HEK293 (cell line): ENCODE measurements at regions of chr6 and their contacts with region 1.

Region 1: DNA sequence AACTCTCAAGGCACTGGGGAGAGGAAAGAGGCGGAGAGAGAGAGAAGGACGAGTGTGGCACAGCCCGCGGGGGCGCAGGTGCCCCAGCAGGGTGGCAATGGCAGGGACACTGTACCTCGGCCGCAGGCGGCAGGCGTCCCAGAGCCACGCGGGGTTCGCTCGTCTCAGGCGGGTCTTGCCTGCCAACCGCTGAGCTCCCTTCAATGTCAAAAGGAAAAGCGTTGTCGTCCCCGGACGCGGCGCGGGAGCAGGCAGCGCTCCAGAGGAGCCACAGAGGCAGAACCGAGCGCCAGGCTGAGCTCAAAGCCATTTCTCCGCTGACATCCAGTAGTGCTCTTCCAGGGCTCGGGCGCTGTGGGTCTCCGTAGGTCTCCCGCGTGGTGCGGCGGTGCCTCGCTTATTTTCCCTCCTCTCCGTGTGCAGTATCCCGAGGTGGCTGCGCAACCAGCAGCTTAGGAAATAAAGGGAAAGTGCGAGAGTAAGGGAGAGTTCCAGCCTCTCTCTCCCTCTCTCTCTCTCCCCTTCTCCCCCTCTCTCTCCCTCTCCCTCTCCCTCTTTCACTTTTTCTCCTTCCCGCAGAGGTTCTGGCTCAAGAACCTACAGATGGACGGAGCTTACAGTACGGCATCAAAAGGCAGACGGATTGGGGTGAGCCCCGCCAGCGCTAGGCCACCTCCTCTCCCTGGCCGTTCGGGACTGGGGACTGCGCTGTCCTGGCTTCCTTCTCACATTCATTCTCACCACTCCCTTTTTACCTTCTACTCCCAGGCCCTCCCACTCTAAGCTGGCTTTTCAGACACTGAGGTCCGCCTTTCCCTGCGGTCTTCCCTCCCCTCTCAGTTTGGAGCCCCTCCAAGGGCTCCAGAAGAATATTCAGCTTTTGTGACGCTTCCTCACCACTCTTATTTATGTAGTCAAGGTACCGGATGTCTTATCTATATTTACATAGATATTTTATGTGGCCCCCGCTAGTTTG is at the start of gene LAMA4:
- H3K4me3 ChIP-seq: peak within 1 kb of the TSS; percentile 74
- H3K27ac ChIP-seq: peak within 1 kb of the TSS; percentile 94
- H3K4me1 ChIP-seq: peaks cover 24% of the 10 kb centered on the region
- CTCF ChIP-seq: peak; percentile 74

Region 2: DNA sequence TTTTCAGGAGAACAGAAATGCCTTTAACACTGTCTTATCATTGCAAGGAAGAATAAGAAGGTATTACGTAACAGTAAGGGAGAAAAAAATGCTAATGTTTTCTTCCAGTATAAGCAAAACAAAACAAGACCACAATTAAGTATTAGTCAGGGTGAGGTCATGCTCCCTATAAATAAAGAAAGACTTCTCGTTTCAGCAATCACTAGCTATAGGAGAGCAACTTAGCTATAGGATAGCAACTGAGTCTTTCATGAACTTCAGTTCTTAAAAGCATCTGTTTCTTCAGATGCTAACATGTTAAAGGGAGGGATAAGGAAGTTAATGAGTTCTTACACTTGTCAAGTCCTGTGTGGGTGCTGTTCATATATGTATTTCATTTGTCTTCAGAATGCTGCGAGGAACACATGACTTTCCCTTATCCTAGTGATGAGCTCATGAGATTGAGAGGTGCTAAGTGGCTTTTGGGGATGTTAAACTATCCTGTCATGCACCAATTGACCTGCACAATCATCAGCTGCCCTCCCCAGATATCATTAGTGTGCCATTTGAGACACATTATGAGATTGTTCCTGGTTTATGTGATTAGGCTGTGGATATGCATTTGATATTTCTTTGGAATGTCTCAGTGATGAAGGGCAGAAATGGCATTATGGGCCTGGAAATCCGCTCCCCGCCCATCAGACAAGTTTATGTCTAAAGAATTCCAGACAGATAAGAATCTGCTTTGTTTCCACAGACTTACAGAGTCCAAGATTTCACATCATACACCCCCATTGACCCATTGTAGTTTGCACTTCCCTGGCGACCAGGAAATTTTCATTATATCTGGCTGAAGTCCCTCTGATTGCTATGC is 37.2 kb before region 1 on chr6:
- CTCF ChIA-PET with region 1: interaction called, 4 read pairs
- POLR2A ChIA-PET with region 1: interaction called, 20 read pairs
- H3K4me3 ChIP-seq: no peak overlapping the region
- H3K27ac ChIP-seq: peak overlapping the region; percentile 48
- H3K4me1 ChIP-seq: peaks cover 41% of the 10 kb centered on the region
- CTCF ChIP-seq: no peak

Region 3: GRCh38 chr6:112223070-112223861 is 30.9 kb before region 1 on chr6:
- CTCF ChIA-PET with region 1: no interaction called
- POLR2A ChIA-PET with region 1: interaction called, 11 read pairs
- H3K4me3 ChIP-seq: no peak overlapping the region
- H3K27ac ChIP-seq: no peak overlapping the region
- H3K4me1 ChIP-seq: peaks cover 14% of the 10 kb centered on the region
- CTCF ChIP-seq: no peak

Region 4: DNA sequence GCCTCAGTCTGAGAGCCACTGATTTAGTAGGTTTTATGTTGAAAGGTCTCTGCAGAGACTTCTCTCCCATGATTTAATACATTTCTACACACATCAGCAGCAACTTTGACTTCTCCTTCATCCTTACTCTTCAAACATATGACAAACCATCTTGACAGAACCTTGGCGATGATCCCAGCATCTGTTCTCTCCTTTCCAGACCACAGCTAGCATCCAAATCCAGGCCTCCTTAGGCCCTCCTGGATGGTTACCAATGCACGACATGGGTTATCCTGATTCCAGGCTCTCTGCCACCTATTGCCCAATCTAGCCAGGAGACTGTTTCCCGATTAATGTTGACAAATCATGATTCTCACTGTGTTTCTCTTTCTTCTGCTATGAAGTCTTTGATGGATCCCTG is 16.5 kb before region 1 on chr6:
- CTCF ChIA-PET with region 1: interaction called, 5 read pairs
- POLR2A ChIA-PET with region 1: interaction called, 32 read pairs
- H3K4me3 ChIP-seq: no peak overlapping the region
- H3K27ac ChIP-seq: no peak overlapping the region
- H3K4me1 ChIP-seq: peaks cover 30% of the 10 kb centered on the region
- CTCF ChIP-seq: no peak

Region 5: DNA sequence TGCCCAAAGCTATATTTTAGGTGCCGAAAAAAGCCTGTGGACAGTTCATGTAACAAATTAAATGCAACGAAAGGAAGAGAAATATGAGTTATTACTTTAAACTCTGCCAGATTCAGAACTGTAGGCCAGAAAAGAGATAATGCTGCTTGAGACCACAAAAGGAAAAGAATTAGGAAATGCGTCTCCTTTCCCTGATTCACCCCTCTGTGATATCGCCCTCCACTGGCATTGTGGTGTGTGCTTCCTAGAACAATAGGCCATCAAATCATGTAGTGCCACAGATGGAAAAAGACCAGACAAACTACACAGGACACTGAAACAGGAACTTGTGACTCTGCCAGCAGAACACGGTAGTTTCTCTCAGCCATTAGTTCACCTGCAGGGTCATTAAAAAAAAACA is 15.0 kb after region 1 on chr6:
- CTCF ChIA-PET with region 1: interaction called, 41 read pairs
- POLR2A ChIA-PET with region 1: interaction called, 16 read pairs
- H3K4me3 ChIP-seq: no peak overlapping the region
- H3K27ac ChIP-seq: no peak overlapping the region
- H3K4me1 ChIP-seq: no peaks in the 10 kb centered on the region
- CTCF ChIP-seq: peak; percentile 33; the same call in 1 of the 2 replicates

Region 6: GRCh38 chr6:112282221-112282620 is 28.1 kb after region 1 on chr6:
- CTCF ChIA-PET with region 1: interaction called, 12 read pairs
- POLR2A ChIA-PET with region 1: interaction called, 5 read pairs
- H3K4me3 ChIP-seq: no peak overlapping the region
- H3K27ac ChIP-seq: no peak overlapping the region
- H3K4me1 ChIP-seq: peaks cover 9% of the 10 kb centered on the region
- CTCF ChIP-seq: peak; percentile 68; the same call in 1 of the 2 replicates

Region 7: DNA sequence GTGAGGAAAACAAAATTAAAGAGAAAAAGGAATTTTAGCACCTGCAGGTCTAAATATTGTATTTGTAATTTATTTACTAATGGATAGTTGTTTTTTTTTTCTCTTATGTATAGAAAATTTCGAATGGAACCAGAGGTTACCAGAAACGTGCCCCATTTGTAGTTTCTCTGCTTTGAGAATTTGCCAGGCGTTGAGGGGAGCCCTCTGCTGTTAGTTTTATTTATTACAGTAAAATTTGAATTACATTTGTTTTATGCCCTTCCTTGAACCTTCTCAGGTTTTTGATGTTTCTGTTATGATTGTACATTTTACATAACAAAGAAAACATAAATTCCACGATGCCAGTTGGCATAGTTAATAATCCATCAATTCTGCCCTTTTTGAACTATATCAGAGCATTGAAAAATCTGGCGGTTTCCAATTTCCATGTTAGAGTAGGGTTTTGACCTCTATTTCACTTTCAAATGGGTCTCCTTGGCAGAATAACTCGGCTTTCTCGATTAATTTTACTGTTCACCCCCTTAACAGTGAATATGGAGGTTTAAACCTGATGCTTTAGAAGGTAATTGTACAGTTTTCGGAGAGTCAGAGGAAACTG is 57.9 kb after region 1 on chr6:
- CTCF ChIA-PET with region 1: interaction called, 19 read pairs
- POLR2A ChIA-PET with region 1: interaction called, 3 read pairs
- H3K4me3 ChIP-seq: no peak overlapping the region
- H3K27ac ChIP-seq: no peak overlapping the region
- H3K4me1 ChIP-seq: no peaks in the 10 kb centered on the region
- CTCF ChIP-seq: 0 out of 2 replicates have a peak, but pooled peaks have one; percentile 10